AG04450 (cell line): ENCODE measurements at regions of chr1 and their contacts with region 1.

Region 1: GRCh38 chr1:77716065-77716464 is 33.6 kb upstream of the ZZZ3 start:
- DNase-seq: no peak
- H3K4me3 ChIP-seq: no peak overlapping the region
- H3K27ac ChIP-seq: no peak overlapping the region
- H3K27me3 ChIP-seq: no peaks in the 10 kb centered on the region
- CTCF ChIP-seq: no peak

Region 2: GRCh38 chr1:77802026-77802425 is 86.0 kb after region 1 on chr1:
- CTCF ChIA-PET with region 1: interaction called, 11 read pairs
- POLR2A ChIA-PET with region 1: no interaction called
- DNase-seq: no peak
- H3K4me3 ChIP-seq: no peak overlapping the region
- H3K27ac ChIP-seq: no peak overlapping the region
- H3K27me3 ChIP-seq: no peaks in the 10 kb centered on the region
- CTCF ChIP-seq: no peak

Region 3: GRCh38 chr1:77866296-77866695 is 150.2 kb after region 1 on chr1:
- CTCF ChIA-PET with region 1: no interaction called
- POLR2A ChIA-PET with region 1: no interaction called
- DNase-seq: no peak
- H3K4me3 ChIP-seq: no peak overlapping the region
- H3K27ac ChIP-seq: no peak overlapping the region
- H3K27me3 ChIP-seq: no peaks in the 10 kb centered on the region
- CTCF ChIP-seq: no peak